Activated CD4-positive, alpha-beta T cell treated with anti-CD3 and anti-CD28 coated beads, Interleukin-2, amount 10 ng/mL, durations not matched to agents 7 days and 5 days (primary cell): ENCODE measurements at regions of chr16 and their contacts with region 1.

Region 1: DNA sequence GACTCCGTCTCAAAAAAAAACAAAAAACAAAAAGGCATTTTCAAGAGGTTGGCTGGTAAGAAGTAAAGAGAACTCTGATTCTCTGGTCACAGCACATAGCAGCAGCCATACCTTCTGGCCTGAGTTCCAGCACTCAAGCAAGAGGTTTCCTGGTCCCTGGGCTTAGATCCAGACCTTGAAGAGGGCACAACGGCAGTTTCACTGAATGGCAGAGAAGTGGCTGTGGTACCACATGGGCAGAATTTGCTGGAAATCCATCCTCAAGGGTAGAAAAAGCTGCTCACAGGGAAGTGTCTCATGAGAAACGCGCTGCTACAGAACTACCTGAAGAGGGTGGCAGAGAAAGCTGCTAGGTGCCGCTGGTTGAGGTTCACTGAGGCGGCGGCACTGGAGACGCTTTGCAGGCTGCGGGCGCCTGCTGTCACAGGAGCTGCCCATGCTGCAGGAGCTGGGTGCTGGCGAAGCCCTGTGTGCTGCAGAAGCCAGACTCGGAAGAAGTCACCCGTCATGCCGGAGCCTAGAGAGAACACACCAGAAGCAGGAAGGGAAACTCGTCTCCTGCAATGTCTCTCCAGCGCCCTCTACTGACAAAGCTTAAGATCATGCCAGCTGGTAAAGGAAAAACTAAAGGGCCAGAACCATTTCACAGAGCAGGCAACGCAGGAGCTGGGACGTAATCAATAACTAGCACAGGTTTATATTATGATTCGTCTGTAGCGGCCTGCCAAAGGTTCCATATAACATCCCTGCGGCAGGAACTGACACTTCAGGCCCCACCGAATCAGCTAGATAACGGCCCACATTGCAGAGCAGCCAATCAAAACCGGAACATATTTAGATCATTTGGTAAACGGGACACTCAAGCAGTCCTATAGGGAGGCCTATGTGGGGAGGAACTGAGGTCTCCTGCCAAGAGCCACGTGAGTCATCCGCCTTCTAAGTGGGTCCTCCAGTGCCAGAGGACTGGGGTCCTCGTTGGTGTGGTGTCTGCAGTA is 5.4 kb upstream of the ZNF213 start:
- DNase-seq: peak; percentile 94
- H3K4me3 Mint-ChIP-seq: peak overlapping the region; percentile 88
- H3K27ac Mint-ChIP-seq: peak overlapping the region; percentile 85
- H3K4me1 Mint-ChIP-seq: peaks cover 63% of the 10 kb centered on the region
- H3K27me3 Mint-ChIP-seq: no peaks in the 10 kb centered on the region

Region 2: DNA sequence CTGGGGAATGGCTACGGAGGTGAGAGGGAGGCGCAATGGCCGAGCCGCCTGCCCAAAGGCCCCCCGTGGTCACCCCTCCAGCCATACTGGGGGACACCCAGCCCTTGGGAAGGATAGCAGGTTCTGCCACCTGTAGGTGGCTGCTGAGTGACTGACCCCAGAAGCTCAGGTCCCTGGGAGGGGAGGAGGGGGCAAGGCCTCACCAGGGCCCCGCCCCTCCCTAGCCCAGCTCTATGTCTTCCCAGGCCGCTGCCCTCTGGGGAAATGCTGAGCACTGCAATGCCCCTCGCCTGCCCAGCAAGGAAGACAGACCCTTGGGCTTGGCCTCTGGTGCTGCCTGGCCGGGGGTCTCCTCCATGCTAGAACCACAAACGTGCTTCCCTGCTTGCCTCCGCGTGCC is 128.1 kb before region 1 on chr16:
- CTCF ChIA-PET with region 1: no interaction called
- POLR2A ChIA-PET with region 1: no interaction called
- DNase-seq: no peak
- H3K4me3 Mint-ChIP-seq: no peak overlapping the region
- H3K27ac Mint-ChIP-seq: no peak overlapping the region
- H3K4me1 Mint-ChIP-seq: peaks cover 12% of the 10 kb centered on the region
- H3K27me3 Mint-ChIP-seq: peaks cover 10% of the 10 kb centered on the region

Region 3: GRCh38 chr16:3045357-3045728 is 84.1 kb before region 1 on chr16:
- CTCF ChIA-PET with region 1: interaction called, 11 read pairs
- POLR2A ChIA-PET with region 1: no interaction called
- DNase-seq: peak; percentile 57
- H3K4me3 Mint-ChIP-seq: peak overlapping the region; percentile 76
- H3K27ac Mint-ChIP-seq: peak overlapping the region; percentile 81
- H3K4me1 Mint-ChIP-seq: peaks cover 31% of the 10 kb centered on the region
- H3K27me3 Mint-ChIP-seq: peaks cover 50% of the 10 kb centered on the region

Region 4: GRCh38 chr16:3074860-3075522 is 54.4 kb before region 1 on chr16:
- CTCF ChIA-PET with region 1: interaction called, 31 read pairs
- POLR2A ChIA-PET with region 1: interaction called, 14 read pairs
- DNase-seq: peak; percentile 94
- H3K4me3 Mint-ChIP-seq: peak overlapping the region; percentile 84
- H3K27ac Mint-ChIP-seq: peak overlapping the region; percentile 98
- H3K4me1 Mint-ChIP-seq: peaks cover 91% of the 10 kb centered on the region
- H3K27me3 Mint-ChIP-seq: no peaks in the 10 kb centered on the region

Region 5: DNA sequence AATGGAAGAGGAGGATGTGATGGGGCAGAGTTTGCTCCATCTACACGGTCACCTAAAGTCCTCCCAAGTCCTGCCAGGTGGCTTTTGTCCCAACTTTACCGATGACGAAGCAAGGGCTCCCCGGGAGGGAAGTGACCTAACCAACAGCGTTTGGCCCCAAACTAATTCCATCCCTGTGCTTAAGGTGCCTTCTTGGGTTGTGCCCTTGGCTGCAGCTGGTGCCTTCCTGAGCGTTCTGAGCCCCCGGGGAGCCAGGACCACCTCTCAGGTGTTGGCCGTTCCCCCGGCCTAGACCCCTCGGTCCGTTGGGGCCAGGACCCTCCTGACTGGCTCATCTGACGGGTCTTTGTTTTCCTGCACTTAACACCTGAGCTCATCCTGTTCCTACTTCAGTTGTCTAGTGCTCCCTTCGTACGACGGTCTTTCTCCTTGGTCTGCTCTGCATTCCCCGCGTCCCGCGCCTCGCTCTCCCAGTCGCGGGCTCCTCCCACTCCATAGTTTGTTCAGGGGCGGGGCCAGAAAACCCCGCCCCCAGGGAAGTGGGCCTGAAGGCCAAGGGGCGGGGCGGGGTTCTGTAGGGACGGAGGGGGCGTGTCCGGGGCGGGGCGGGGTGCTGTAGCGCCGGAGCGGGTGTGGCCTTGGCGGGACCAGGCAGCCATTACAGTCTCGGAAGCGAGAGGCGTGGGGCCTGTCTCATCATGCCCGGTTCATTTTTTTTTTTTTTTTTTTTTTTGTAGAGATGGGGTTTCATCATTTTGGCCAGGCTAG is 29.5 kb before region 1 on chr16:
- CTCF ChIA-PET with region 1: interaction called, 38 read pairs
- POLR2A ChIA-PET with region 1: interaction called, 3 read pairs
- DNase-seq: peak; percentile 94
- H3K4me3 Mint-ChIP-seq: peak overlapping the region; percentile 84
- H3K27ac Mint-ChIP-seq: peak overlapping the region; percentile 91
- H3K4me1 Mint-ChIP-seq: peaks cover 71% of the 10 kb centered on the region
- H3K27me3 Mint-ChIP-seq: no peaks in the 10 kb centered on the region

Region 6: GRCh38 chr16:3118204-3118806 is 11.1 kb before region 1 on chr16:
- CTCF ChIA-PET with region 1: interaction called, 28 read pairs
- POLR2A ChIA-PET with region 1: interaction called, 3 read pairs
- DNase-seq: no peak
- H3K4me3 Mint-ChIP-seq: no peak overlapping the region
- H3K27ac Mint-ChIP-seq: no peak overlapping the region
- H3K4me1 Mint-ChIP-seq: peaks cover 8% of the 10 kb centered on the region
- H3K27me3 Mint-ChIP-seq: no peaks in the 10 kb centered on the region